K562 (cell line): ENCODE measurements at regions of chr12 and their contacts with region 1.

Region 1: DNA sequence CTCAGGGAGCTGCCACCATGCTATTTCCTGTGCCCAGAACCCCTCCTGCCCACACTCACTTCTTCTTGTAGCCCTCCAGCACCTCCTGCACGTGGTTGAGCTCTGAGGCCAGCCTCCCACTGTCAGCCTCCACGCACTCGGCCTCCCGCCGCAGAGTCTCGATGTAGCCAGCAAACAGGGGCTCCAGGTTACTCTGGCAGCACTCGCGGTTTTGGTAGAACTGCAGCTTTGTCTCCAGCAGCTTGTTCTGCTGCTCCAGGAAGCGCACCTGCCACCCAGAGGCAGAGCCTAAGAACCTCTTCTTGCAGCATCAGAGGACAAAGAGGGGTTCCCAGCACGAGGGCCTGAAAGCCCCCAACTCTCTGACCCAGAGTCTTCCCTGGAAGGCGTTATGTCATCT is 2.1 kb downstream of the KRT83 start:
- DNase-seq: no peak
- ATAC-seq: no peak
- H3K4me3 ChIP-seq: no peak overlapping the region
- H3K27ac ChIP-seq: no peak overlapping the region
- H3K4me1 ChIP-seq: no peaks in the 10 kb centered on the region
- H3K27me3 ChIP-seq: peaks cover 8 to 77% of the 10 kb centered on the region in 2 experiments; a peak in 4 of 5 replicates
- CTCF ChIP-seq: no peak
- EP300 ChIP-seq: no peak
- POLR2A ChIP-seq: no peak
- RAD21 ChIP-seq: no peak

Region 2: GRCh38 chr12:52192173-52192791 is 126.8 kb before region 1 on chr12:
- CTCF ChIA-PET with region 1: no interaction called
- POLR2A ChIA-PET with region 1: no interaction called
- in situ Hi-C with region 1: no loop called
- intact Hi-C with region 1: no loop called
- DNase-seq: no peak
- ATAC-seq: no peak
- H3K4me3 ChIP-seq: no peak overlapping the region
- H3K27ac ChIP-seq: no peak overlapping the region
- H3K4me1 ChIP-seq: peaks cover 0 to 4% of the 10 kb centered on the region in 2 experiments; a peak in 1 of 5 replicates
- H3K27me3 ChIP-seq: peaks cover 0 to 31% of the 10 kb centered on the region in 2 experiments; a peak in 2 of 5 replicates
- CTCF ChIP-seq: no peak
- EP300 ChIP-seq: no peak
- POLR2A ChIP-seq: no peak
- RAD21 ChIP-seq: no peak

Region 3: GRCh38 chr12:52215587-52216048 is 103.5 kb before region 1 on chr12:
- CTCF ChIA-PET with region 1: no interaction called
- POLR2A ChIA-PET with region 1: no interaction called
- in situ Hi-C with region 1: loop called (anchors 5 kb)
- intact Hi-C with region 1: no loop called
- DNase-seq: peak in 3 of 4 experiments; percentile 12 to 49 (median 37)
- ATAC-seq: no peak
- H3K4me3 ChIP-seq: no peak overlapping the region
- H3K27ac ChIP-seq: no peak overlapping the region
- H3K4me1 ChIP-seq: no peaks in the 10 kb centered on the region; a peak in 1 of 5 replicates
- H3K27me3 ChIP-seq: peaks cover 5 to 20% of the 10 kb centered on the region in 2 experiments; a peak in 4 of 5 replicates
- CTCF ChIP-seq: no peak
- EP300 ChIP-seq: no peak
- POLR2A ChIP-seq: no peak
- RAD21 ChIP-seq: no peak